ENCODE measurements at regions of chr1 and their contacts with region 1.

Region 1: DNA sequence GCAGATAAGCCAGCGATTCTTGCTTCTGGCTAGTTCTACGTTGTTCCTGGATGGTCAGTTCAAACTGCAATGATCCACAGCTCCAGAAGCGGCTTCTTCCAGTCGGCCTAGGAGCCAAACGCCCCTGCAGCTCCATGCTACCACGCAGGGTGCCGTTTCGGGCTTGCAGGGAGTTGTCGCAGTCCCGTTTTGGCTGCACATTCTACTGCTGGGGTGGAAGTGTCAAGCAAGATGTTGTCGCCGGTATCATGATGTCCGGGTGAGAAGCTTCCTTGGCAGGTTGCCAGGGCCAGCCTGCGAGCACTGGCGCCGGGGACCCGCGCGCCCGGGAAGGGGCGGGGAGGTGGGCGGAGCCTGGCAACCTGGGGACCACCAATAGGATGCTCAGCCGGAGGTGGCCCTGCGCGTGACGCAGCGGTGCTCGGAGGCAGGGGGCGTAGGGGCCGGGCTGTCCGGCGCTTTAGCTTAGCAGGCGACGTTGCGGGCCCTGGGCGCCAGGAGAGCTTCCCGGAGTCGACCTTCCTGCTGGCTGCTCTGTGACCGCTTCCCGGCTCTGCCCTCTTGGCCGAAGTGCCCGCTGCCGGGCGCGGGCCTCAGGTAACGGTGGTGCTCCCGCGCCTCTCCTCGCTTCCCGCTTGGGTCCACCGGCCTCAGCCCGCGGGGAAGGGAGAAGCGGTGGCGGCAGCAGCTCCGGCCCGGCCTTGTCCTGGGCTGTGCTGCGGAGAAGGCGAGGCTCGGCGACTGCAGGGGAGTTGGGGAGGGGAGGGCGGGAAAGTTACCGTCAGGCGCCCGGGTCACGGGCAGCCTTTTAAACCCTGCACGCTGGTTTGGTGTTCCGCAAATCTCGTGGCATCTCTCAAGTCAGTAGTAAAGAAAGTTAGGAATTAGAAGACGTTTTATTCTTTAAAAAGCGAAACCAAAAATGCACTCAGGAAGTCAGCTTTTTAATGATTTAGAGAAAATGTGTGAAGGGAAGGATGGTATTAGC is at the start of gene SOAT1:
- DNase-seq: peak; percentile 43
- ATAC-seq: peak; percentile 98
- H3K4me3 ChIP-seq: peak within 1 kb of the TSS; percentile 69 to 79
- H3K27ac ChIP-seq: peak within 1 kb of the TSS; percentile 90
- H3K4me1 ChIP-seq: peaks cover 23% of the 10 kb centered on the region
- H3K27me3 ChIP-seq: no peaks in the 10 kb centered on the region
- CTCF ChIP-seq: no peak; the same call in none of the 2 replicates
- total RNA-seq, gene SOAT1: 57.2 TPM

Region 2: DNA sequence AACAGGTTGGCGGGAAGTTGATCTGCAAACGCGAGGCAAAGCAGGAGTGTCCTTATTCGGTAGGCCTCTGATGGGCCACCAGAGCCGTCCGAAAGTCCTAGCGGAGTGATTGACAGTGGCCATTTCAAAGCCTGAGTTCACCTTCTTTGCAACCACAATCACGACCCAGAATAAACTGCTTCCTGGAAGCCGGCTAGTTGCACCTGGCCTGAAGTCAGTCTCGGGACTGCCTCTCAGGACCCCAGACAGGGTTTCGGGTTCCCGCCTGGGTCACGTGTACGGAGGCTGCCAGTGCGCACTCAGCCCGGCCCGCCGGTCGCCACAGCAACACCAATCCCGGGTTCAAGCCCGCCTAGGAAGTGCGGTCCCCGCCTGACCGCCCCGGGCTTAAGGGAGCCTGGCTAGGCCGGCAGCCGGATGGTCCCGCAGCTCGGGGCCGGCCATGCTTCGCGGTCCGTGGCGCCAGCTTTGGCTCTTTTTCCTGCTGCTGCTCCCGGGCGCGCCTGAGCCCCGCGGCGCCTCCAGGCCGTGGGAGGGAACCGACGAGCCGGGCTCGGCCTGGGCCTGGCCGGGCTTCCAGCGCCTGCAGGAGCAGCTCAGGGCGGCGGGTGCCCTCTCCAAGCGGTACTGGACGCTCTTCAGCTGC is 211.8 kb before region 1 on chr1 and contains the start of gene TOR3A:
- CTCF ChIA-PET with region 1: no interaction called
- POLR2A ChIA-PET with region 1: no interaction called
- in situ Hi-C with region 1: no loop called
- intact Hi-C with region 1: loop called (anchors 5 kb)
- DNase-seq: peak; percentile 54
- ATAC-seq: peak; percentile 95
- H3K4me3 ChIP-seq: peak within 1 kb of the TSS; percentile 74 to 85
- H3K27ac ChIP-seq: peak within 1 kb of the TSS; percentile 91
- H3K4me1 ChIP-seq: peaks cover 5% of the 10 kb centered on the region; the same call in 1 of the 2 replicates
- H3K27me3 ChIP-seq: no peaks in the 10 kb centered on the region
- CTCF ChIP-seq: no peak
- total RNA-seq, gene TOR3A: 51.5 TPM

Region 3: GRCh38 chr1:179121159-179121938 is 172.3 kb before region 1 on chr1:
- CTCF ChIA-PET with region 1: interaction called, 8 read pairs
- POLR2A ChIA-PET with region 1: no interaction called
- in situ Hi-C with region 1: no loop called
- intact Hi-C with region 1: loop called (anchors 2 kb)
- DNase-seq: no peak
- ATAC-seq: peak; percentile 66
- H3K4me3 ChIP-seq: no peak overlapping the region
- H3K27ac ChIP-seq: no peak overlapping the region
- H3K4me1 ChIP-seq: no peaks in the 10 kb centered on the region
- H3K27me3 ChIP-seq: no peaks in the 10 kb centered on the region
- CTCF ChIP-seq: peak; percentile 74; the same call in 1 of the 2 replicates

Region 4: GRCh38 chr1:179175011-179175841 is 118.4 kb before region 1 on chr1:
- CTCF ChIA-PET with region 1: no interaction called
- POLR2A ChIA-PET with region 1: no interaction called
- in situ Hi-C with region 1: no loop called
- intact Hi-C with region 1: no loop called
- DNase-seq: no peak
- ATAC-seq: peak; percentile 56; the same call in 1 of the 2 replicates
- H3K4me3 ChIP-seq: no peak overlapping the region
- H3K27ac ChIP-seq: 0 out of 2 replicates have a peak overlapping the region, but pooled peaks have one; percentile 30
- H3K4me1 ChIP-seq: no peaks in the 10 kb centered on the region
- H3K27me3 ChIP-seq: no peaks in the 10 kb centered on the region
- CTCF ChIP-seq: no peak

Region 5: GRCh38 chr1:179190861-179191260 is 102.8 kb before region 1 on chr1:
- CTCF ChIA-PET with region 1: no interaction called
- POLR2A ChIA-PET with region 1: no interaction called
- in situ Hi-C with region 1: no loop called
- intact Hi-C with region 1: no loop called
- DNase-seq: no peak
- ATAC-seq: no peak
- H3K4me3 ChIP-seq: no peak overlapping the region
- H3K27ac ChIP-seq: no peak overlapping the region
- H3K4me1 ChIP-seq: no peaks in the 10 kb centered on the region
- H3K27me3 ChIP-seq: no peaks in the 10 kb centered on the region
- CTCF ChIP-seq: no peak

Region 6: GRCh38 chr1:179251675-179252074 is 42.0 kb before region 1 on chr1:
- CTCF ChIA-PET with region 1: interaction called, 3 read pairs
- POLR2A ChIA-PET with region 1: no interaction called
- in situ Hi-C with region 1: no loop called
- intact Hi-C with region 1: loop called (anchors 1 kb)
- DNase-seq: peak; percentile 38
- ATAC-seq: peak; percentile 85; the same call in 1 of the 2 replicates
- H3K4me3 ChIP-seq: no peak overlapping the region
- H3K27ac ChIP-seq: no peak overlapping the region
- H3K4me1 ChIP-seq: no peaks in the 10 kb centered on the region
- H3K27me3 ChIP-seq: no peaks in the 10 kb centered on the region
- CTCF ChIP-seq: no peak; the same call in 1 of the 2 replicates